PC-9 (cell line): ENCODE measurements at regions of chr12 and their contacts with region 1.

Region 1: GRCh38 chr12:32659908-32660440 is 19.1 kb upstream of the DNM1L start:
- DNase-seq: no peak
- H3K4me3 ChIP-seq: no peak overlapping the region
- H3K27ac ChIP-seq: no peak overlapping the region
- H3K4me1 ChIP-seq: no peaks in the 10 kb centered on the region
- H3K27me3 ChIP-seq: no peaks in the 10 kb centered on the region
- CTCF ChIP-seq: no peak

Region 2: GRCh38 chr12:32322354-32322753 is 337.6 kb before region 1 on chr12:
- CTCF ChIA-PET with region 1: interaction called, 13 read pairs
- POLR2A ChIA-PET with region 1: no interaction called
- intact Hi-C with region 1: no loop called
- DNase-seq: no peak
- H3K4me3 ChIP-seq: no peak overlapping the region
- H3K27ac ChIP-seq: no peak overlapping the region
- H3K4me1 ChIP-seq: no peaks in the 10 kb centered on the region
- H3K27me3 ChIP-seq: no peaks in the 10 kb centered on the region
- CTCF ChIP-seq: no peak

Region 3: DNA sequence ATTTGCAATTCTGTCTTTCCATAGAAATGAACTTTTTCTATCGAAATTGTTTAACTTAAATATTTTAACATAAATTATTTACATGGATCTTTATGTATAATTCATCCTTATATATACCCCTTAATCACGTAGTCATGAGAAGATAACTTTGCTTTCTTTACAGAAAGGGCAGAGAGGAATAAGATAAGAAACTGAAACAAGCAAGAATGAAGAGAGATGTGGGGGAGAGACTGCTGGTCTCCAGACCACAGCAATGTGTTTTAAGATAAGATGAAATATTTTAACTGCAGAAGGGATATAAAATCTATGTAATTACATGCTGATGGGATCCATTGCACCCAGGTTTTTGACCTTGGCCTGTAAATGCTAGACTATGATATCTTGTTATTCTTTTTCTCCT is 15.5 kb before region 1 on chr12:
- CTCF ChIA-PET with region 1: no interaction called
- POLR2A ChIA-PET with region 1: no interaction called
- intact Hi-C with region 1: no loop called
- DNase-seq: no peak
- H3K4me3 ChIP-seq: no peak overlapping the region
- H3K27ac ChIP-seq: no peak overlapping the region
- H3K4me1 ChIP-seq: no peaks in the 10 kb centered on the region
- H3K27me3 ChIP-seq: no peaks in the 10 kb centered on the region
- CTCF ChIP-seq: no peak